ENCODE measurements at regions of chr1 and their contacts with region 1.

Region 1: DNA sequence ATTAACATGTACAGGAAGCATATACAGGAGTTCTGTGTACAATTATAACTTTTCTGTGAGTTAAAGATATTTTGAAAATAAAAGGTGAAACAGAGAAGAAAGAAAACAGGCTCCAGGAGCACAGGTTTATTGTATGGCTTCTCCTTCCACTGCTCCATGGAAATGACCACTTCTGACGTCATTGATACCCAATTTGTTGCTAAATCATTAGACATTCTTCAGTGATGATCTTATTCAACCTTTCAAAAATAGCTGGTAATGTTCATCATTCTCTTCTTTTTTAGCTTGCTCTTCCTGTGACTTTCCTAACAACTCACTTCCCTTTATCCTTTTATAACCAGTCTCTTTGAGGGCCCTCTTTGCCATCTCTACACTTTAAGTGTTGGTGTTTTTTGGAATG is 77.8 kb downstream of the KCNK2 start:
- DNase-seq: no peak
- ATAC-seq: no peak
- H3K4me3 ChIP-seq: no peak overlapping the region
- H3K4me3 Mint-ChIP-seq: no peak overlapping the region
- H3K27ac ChIP-seq: no peak overlapping the region
- H3K27ac Mint-ChIP-seq: no peak overlapping the region
- H3K4me1 ChIP-seq: no peaks in the 10 kb centered on the region
- H3K4me1 Mint-ChIP-seq: no peaks in the 10 kb centered on the region
- H3K27me3 ChIP-seq: no peaks in the 10 kb centered on the region
- H3K27me3 Mint-ChIP-seq: no peaks in the 10 kb centered on the region
- CTCF ChIP-seq: no peak

Region 2: GRCh38 chr1:215104283-215104682 is 56.1 kb before region 1 on chr1:
- CTCF ChIA-PET with region 1: no interaction called
- POLR2A ChIA-PET with region 1: no interaction called
- intact Hi-C with region 1: no loop called
- DNase-seq: no peak
- ATAC-seq: no peak
- H3K4me3 ChIP-seq: no peak overlapping the region
- H3K4me3 Mint-ChIP-seq: no peak overlapping the region
- H3K27ac ChIP-seq: no peak overlapping the region
- H3K27ac Mint-ChIP-seq: no peak overlapping the region
- H3K4me1 ChIP-seq: no peaks in the 10 kb centered on the region
- H3K4me1 Mint-ChIP-seq: no peaks in the 10 kb centered on the region
- H3K27me3 ChIP-seq: no peaks in the 10 kb centered on the region
- H3K27me3 Mint-ChIP-seq: peaks cover 12% of the 10 kb centered on the region
- CTCF ChIP-seq: no peak

Region 3: GRCh38 chr1:215119719-215120365 is 40.5 kb before region 1 on chr1:
- CTCF ChIA-PET with region 1: no interaction called
- POLR2A ChIA-PET with region 1: no interaction called
- intact Hi-C with region 1: loop called in 1 of 2 experiments (anchors 5 kb)
- DNase-seq: no peak
- ATAC-seq: no peak
- H3K4me3 ChIP-seq: no peak overlapping the region
- H3K4me3 Mint-ChIP-seq: no peak overlapping the region
- H3K27ac ChIP-seq: no peak overlapping the region
- H3K27ac Mint-ChIP-seq: no peak overlapping the region
- H3K4me1 ChIP-seq: no peaks in the 10 kb centered on the region
- H3K4me1 Mint-ChIP-seq: no peaks in the 10 kb centered on the region
- H3K27me3 ChIP-seq: no peaks in the 10 kb centered on the region
- H3K27me3 Mint-ChIP-seq: peaks cover 13% of the 10 kb centered on the region
- CTCF ChIP-seq: no peak

Region 4: GRCh38 chr1:215146341-215146826 is 14.0 kb before region 1 on chr1:
- CTCF ChIA-PET with region 1: no interaction called
- POLR2A ChIA-PET with region 1: no interaction called
- intact Hi-C with region 1: no loop called
- DNase-seq: peak in 3 of 14 experiments; percentile 7 to 14 (median 7)
- ATAC-seq: no peak
- H3K4me3 ChIP-seq: no peak overlapping the region
- H3K4me3 Mint-ChIP-seq: no peak overlapping the region
- H3K27ac ChIP-seq: no peak overlapping the region
- H3K27ac Mint-ChIP-seq: no peak overlapping the region
- H3K4me1 ChIP-seq: no peaks in the 10 kb centered on the region
- H3K4me1 Mint-ChIP-seq: peaks cover 4% of the 10 kb centered on the region
- H3K27me3 ChIP-seq: no peaks in the 10 kb centered on the region
- H3K27me3 Mint-ChIP-seq: no peaks in the 10 kb centered on the region
- CTCF ChIP-seq: no peak

Measured in CD4-positive, alpha-beta T cell (primary cell).